GM10248 (cell line): ENCODE measurements at regions of chr11 and their contacts with region 1.

Region 1: DNA sequence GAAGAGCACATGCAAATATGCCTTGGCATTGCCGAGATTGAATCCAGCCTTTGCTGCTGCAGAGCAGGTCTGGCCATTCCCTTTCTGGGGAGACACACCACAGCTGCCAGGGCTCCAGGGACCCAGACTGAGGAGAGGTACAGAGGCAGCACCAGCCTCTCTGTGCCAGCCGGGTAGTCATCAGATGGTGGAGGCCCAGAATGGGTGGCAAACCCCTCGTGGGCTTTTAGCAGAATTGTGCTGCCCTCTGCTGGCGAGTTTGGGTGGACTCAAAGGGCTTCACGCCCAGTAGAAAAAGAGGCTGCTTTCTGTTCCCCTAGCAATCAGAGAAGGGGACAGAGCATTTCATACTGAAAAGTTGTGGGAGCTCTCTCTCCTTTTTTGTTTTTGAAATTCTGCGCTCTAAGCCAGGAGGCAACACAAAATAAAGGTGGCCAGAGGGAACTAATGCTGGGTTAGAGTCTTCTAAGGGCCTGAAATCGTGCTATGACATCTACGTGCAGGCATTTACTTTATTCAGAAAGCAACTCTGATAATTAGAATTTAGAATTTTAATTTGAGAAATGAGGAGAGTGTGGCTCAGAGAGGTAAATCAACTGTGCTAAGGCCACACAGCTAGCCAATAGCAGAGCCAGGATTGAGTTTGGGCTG is 158.8 kb upstream of the NAV2 start:
- DNase-seq: peak; percentile 75
- CTCF ChIP-seq: peak; percentile 78

Region 2: DNA sequence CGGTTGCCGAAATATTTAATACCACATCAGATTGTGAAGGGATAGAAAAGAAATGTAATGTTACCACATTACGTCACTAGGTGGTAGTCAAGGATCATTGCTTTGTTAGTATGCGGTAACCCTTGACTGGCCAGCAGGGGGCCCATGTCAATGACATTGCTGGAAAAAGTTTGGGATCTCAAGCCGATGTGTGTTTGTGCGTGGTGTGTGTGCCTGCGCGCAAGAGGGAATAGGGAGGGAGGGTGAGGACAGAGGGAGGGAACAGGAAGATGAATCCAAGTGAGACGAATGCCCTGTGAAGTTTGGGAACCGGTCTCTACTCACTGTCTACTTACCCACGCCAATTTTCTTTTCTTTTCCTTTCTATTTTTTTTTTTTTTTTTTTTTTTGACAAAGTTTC is 482.6 kb before region 1 on chr11:
- CTCF ChIA-PET with region 1: interaction called, 62 read pairs
- POLR2A ChIA-PET with region 1: no interaction called
- DNase-seq: peak; percentile 79
- CTCF ChIP-seq: peak; percentile 93

Region 3: DNA sequence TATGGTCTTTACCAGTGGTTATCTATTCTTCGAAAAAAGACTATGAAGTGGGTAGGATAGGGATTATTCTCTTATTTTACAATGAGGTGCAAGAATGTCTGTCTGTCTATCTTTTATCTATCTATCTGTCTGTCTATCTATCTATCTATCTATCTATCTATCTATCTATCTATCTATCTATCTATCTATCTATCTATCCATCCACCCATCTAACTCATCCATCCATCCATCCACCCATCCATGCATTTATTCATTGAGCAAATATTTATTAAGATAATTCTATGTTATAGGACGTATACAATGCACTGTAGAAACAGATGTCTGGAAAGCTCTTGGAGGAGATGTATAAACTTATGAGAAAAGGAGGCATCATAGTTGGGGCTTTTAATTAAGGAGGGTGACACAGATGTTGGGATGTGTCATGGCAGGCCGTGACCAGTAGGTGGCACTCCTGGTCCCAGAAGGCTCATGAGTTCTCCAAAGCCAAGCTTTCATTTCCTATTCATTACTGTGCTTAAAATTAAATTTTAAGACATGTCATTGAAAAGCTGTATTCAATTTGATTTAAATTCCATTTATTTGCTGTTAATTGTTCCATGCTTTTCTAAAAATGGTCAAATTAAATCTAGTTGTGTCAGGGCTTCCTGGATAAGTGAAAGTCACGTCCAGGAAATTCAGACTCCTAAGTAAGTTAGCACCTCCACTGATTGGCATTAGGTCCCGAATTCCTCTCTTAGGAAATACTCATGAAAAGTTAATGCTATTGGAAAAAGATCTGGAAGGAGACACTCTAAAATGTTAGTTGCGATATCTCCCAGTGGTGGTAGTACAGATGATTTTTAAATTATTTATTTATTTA is 294.1 kb before region 1 on chr11:
- CTCF ChIA-PET with region 1: interaction called, 66 read pairs
- POLR2A ChIA-PET with region 1: no interaction called
- DNase-seq: peak; percentile 73
- CTCF ChIP-seq: peak; percentile 93

Region 4: GRCh38 chr11:19326499-19326898 is 227.3 kb before region 1 on chr11:
- CTCF ChIA-PET with region 1: interaction called, 45 read pairs
- POLR2A ChIA-PET with region 1: no interaction called
- DNase-seq: no peak
- CTCF ChIP-seq: peak; percentile 4

Region 5: DNA sequence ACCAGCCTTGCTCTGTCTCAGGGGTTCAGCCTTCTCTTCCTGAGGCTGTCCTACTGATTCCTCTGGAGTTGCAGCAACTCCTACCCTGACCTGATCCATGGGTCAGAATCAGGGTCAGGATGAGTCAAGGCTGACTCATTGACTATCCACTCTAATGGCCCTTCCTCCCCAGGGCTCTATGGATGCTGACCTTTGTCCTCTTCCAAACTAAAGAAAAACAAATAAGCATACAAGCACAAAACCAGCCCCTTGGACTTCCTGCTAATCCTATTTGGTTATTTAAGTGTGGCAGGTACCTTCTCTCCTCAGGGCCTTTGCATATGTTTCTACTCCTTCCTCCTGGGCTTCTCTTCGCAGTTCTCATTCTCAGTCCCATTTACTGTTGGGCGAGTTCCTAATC is 45.6 kb before region 1 on chr11:
- CTCF ChIA-PET with region 1: no interaction called
- POLR2A ChIA-PET with region 1: no interaction called
- DNase-seq: no peak
- CTCF ChIP-seq: no peak

Region 6: DNA sequence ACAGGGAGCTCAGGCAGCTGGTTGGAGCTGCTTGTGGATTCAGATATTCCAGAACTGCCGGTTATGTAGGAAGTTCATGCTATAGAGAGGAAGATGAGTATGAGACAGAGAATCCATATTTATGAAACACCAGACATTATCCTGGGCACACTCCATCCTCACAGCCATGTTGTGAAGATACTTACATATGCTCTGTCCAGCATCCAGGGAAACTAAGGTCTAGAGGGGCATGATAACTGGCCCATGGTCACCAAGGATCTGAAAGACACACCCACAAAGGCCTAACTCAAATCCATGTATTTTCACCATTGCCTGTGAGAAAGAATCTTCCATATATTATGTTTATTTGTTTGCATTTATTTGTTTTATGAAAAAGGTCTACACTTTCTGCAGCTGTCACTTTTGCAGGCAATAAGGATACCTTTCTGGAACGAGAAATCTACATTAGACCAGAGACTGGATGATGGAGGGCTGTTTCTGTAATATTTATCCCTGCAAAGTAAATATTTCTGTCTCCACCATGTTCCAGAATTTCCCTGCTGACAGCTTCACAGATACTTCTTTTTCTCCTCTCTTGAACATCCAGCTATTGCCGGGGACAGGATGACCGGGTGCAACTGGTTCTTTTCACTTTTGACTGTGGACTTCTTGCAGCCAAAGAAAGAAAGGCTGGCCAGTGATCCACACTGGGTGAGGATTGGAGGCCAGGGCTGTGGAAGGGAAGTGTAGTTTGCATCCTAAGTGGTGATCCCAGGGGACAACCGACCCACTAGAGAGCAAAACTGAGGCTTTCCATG is 13.0 kb after region 1 on chr11:
- CTCF ChIA-PET with region 1: interaction called, 120 read pairs
- POLR2A ChIA-PET with region 1: no interaction called
- DNase-seq: no peak
- CTCF ChIP-seq: no peak

Region 7: DNA sequence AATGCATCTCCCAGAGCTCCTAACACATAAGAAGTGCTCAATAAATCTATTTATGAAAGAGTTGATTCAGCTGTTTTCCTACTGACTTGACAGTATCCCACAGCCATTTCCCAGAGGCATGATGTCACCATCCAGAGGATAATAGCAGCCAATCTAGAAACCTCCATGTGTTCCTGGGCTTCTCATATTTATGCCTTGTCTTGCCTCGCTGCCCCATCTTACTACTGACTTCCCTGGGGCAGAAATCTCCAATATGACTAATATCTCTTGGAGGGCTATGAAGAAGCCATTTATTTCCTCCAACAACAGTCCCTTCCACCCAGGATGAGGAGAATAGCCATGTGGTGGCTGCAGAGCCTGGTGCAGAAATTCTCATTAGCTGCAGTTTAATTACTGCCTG is 43.4 kb after region 1 on chr11:
- CTCF ChIA-PET with region 1: no interaction called
- POLR2A ChIA-PET with region 1: no interaction called
- DNase-seq: no peak
- CTCF ChIP-seq: no peak

Region 8: DNA sequence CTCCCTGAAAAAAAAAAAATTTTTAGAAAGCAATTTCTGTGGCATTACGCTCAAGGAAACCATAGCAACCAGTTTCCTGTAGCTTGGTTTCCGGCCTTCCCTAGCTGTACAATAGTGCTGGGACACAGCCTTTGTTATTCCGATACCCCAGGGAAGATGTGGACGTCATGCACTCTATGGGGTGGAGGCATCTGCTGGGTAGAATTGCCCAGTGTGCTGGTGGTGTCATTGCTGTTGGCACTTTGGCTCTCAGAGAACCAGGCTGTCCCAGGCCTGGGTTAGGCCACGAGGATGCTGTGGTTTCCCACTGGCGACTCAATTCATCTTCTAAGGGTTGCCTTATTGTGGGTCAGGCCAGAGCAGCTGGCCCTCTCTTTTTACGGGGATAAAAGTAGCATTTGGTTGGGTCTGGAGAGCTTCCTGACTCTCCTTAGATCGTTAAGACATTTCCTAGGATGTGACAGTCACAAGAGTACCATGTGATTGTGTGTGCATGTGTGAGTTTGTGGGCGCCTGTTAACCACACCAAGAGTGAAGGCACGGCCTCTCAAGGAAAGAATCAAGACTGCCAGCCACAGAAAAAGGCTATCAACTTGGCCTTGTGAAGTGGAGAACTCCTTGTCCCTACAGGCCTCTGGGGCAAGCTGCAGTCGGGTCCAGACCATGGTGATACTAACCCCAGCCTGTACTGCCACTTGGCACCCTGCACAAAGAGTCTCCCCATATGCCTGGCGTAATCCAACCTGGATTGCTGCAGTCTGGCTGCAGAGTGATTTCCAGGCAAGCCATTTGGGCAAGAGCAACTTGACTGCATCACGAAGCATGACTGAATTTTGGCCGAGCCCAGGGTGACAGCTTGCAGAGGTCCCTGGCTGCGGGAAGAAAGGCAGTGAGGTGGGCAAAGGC is 122.9 kb after region 1 on chr11:
- CTCF ChIA-PET with region 1: no interaction called
- POLR2A ChIA-PET with region 1: no interaction called
- DNase-seq: no peak
- CTCF ChIP-seq: no peak

Region 9: DNA sequence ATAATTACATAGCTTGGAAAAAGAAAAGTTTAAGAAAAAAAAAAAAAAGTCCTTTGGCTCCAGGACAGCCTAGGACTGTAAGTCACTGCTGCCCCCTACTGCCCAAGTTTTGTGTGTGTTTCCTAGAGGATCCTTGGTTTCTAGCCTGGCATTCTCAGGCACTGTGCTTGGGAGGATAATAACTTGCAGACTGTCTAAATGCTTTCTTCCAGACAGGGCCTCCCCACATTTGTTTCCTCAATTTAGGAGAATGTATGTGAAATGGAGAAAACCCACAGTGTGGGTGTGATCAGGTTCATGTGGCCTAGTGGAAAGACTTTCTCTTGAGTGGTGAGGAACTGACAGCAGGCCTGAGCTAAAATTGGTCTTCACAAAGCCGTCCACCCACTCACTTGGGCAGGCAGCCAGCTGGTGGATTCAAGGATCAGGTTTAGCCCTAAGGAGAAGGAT is 349.8 kb after region 1 on chr11:
- CTCF ChIA-PET with region 1: interaction called, 66 read pairs
- POLR2A ChIA-PET with region 1: no interaction called
- DNase-seq: peak; percentile 47
- CTCF ChIP-seq: peak; percentile 67